Panc1 (cell line): ENCODE measurements at regions of chr1 and their contacts with region 1.

Region 1: GRCh38 chr1:114346480-114347029 is 164.4 kb downstream of the TRIM33 start:
- DNase-seq: peak; percentile 84
- ATAC-seq: peak; percentile 99
- H3K4me3 ChIP-seq: peak overlapping the region; percentile 37 to 67
- H3K27ac ChIP-seq: no peak overlapping the region
- H3K4me1 ChIP-seq: no peaks in the 10 kb centered on the region
- H3K27me3 ChIP-seq: no peaks in the 10 kb centered on the region
- CTCF ChIP-seq: peak; percentile 99

Region 2: DNA sequence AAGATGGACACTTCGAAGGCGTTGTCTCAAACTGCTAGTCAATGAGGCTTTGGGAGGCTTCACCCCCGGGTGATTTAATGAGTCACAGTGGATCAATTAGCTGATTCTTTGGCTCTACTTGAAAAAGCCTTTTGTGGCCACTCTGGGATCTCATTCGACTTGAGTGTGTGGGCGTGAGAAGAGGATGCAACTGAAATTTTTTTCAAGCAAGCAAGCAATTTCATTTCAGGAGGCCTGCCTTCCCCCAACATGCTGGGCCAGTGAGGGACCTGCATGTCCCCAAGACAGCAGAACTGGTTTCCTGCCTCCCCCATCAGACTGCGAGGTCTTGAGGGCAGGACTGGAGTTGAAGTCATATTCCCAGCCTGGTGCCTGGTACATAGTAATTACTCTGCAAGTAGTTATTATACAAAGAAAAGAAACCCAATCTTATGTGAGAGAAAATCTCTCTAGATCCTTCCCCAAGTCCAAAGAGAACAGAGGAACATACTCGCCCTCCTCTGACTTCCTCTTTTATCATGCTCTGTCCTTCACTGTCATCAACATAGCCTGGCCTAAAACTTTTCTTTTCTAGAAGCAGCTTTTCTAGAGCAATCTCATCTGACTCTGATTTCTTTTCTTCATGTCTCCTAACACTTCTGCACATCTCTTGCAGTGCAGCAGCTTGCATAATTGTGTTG is 215.6 kb before region 1 on chr1:
- CTCF ChIA-PET with region 1: no interaction called
- POLR2A ChIA-PET with region 1: no interaction called
- in situ Hi-C with region 1: no loop called
- intact Hi-C with region 1: no loop called
- DNase-seq: no peak
- ATAC-seq: no peak
- H3K4me3 ChIP-seq: no peak overlapping the region
- H3K27ac ChIP-seq: no peak overlapping the region
- H3K4me1 ChIP-seq: no peaks in the 10 kb centered on the region
- H3K27me3 ChIP-seq: no peaks in the 10 kb centered on the region; the same call in 1 of the 2 replicates
- CTCF ChIP-seq: no peak

Region 3: DNA sequence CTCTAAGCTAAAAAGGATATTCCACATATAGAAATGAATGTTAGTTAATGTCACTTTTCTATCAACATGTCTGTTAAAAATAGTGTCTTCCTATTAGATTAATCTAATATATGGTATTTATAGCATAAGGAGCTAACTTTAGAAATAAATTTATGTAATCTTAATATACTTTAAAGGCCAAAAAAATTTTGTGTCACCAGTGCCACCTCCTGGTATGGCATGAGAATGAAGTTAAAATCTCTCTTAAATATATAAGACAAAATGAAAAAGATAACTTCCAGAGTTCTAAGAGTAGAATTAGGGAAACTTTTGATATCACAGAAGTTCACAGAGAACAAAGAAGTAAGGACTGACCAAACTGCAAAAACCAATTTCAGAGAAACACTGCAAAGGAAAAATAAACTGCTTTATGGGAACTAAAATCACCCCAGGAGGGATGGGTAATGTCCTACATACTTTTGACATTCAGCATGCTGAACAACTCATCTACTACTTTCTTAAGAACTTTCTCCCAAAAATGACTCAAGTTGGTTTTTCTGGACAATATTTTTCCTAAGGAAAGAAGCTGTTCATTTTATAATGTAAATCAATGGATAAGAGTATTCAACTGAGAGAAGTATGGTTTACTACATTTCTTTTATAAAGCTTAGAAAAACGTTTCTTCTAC is 81.7 kb after region 1 on chr1:
- CTCF ChIA-PET with region 1: interaction called, 3 read pairs
- POLR2A ChIA-PET with region 1: no interaction called
- in situ Hi-C with region 1: no loop called
- intact Hi-C with region 1: loop called (anchors 5 kb)
- DNase-seq: no peak
- ATAC-seq: no peak
- H3K4me3 ChIP-seq: no peak overlapping the region
- H3K27ac ChIP-seq: no peak overlapping the region
- H3K4me1 ChIP-seq: no peaks in the 10 kb centered on the region
- H3K27me3 ChIP-seq: no peaks in the 10 kb centered on the region
- CTCF ChIP-seq: peak; percentile 32; the same call in 1 of the 2 replicates

Region 4: GRCh38 chr1:114670083-114671010 is 323.8 kb after region 1 on chr1:
- CTCF ChIA-PET with region 1: no interaction called
- POLR2A ChIA-PET with region 1: no interaction called
- in situ Hi-C with region 1: no loop called
- intact Hi-C with region 1: loop called (anchors 5 kb)
- DNase-seq: peak; percentile 27
- ATAC-seq: peak; percentile 99
- H3K4me3 ChIP-seq: peak overlapping the region; percentile 59 to 71
- H3K27ac ChIP-seq: no peak overlapping the region
- H3K4me1 ChIP-seq: no peaks in the 10 kb centered on the region
- H3K27me3 ChIP-seq: peaks cover 2% of the 10 kb centered on the region; the same call in 1 of the 2 replicates
- CTCF ChIP-seq: no peak